ENCODE measurements at regions of chr6 and their contacts with region 1.

Region 1: GRCh38 chr6:149028767-149029405 is 282.1 kb downstream of the UST start:
- DNase-seq: peak; percentile 80
- H3K4me3 ChIP-seq: no peak overlapping the region
- CTCF ChIP-seq: peak; percentile 15

Region 2: GRCh38 chr6:148570451-148570850 is 458.4 kb before region 1 on chr6:
- CTCF ChIA-PET with region 1: interaction called, 105 read pairs
- POLR2A ChIA-PET with region 1: no interaction called
- DNase-seq: no peak
- H3K4me3 ChIP-seq: no peak overlapping the region
- CTCF ChIP-seq: no peak

Region 3: DNA sequence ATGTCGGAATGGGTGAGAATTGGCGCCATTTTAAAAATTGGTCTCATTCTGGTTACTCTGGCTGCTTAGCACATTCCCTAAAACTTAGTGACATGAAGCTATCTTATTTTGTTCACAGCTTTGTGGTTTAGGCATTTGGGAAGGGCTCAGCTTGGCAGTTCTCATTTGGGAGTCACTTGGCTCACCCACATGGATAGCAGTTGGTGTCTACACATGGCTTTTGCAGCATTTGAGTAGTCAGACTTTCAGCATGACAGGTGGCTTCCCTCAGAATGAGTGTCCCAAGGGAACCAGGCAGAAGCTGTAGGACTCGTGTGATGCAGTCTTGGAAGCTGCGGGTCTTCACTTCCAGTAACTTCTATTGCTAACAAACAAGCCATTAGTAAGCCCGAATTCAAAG is 217.4 kb before region 1 on chr6:
- CTCF ChIA-PET with region 1: no interaction called
- POLR2A ChIA-PET with region 1: no interaction called
- DNase-seq: no peak
- H3K4me3 ChIP-seq: no peak overlapping the region
- CTCF ChIP-seq: no peak

Region 4: GRCh38 chr6:148972481-148972880 is 56.4 kb before region 1 on chr6:
- CTCF ChIA-PET with region 1: interaction called, 15 read pairs
- POLR2A ChIA-PET with region 1: no interaction called
- DNase-seq: no peak
- H3K4me3 ChIP-seq: no peak overlapping the region
- CTCF ChIP-seq: no peak

Region 5: DNA sequence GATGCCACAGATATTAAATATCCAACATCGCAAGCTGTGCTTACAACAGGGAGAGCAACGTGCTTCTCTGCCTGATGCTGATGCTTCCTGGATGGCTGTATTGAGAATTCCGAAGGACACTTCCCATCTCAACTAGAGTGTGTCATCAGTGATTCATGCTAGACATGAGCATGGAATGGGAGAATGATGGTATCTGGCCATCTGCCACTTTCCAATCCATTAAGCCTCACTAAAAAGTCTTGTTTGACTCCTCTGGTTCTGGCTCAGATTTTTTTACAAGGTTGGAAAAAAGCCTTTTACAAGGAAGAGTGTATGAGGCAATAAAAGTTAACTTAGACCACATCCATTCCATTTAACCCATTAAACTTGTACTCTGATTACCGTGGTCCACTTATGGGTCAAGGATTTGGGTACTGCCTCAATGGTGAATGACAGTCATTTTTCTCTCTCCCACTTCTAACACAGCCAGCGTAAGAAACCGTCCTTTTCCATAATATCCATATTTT is 16.8 kb before region 1 on chr6:
- CTCF ChIA-PET with region 1: interaction called, 51 read pairs
- POLR2A ChIA-PET with region 1: no interaction called
- DNase-seq: peak; percentile 98
- H3K4me3 ChIP-seq: no peak overlapping the region
- CTCF ChIP-seq: no peak

Region 6: DNA sequence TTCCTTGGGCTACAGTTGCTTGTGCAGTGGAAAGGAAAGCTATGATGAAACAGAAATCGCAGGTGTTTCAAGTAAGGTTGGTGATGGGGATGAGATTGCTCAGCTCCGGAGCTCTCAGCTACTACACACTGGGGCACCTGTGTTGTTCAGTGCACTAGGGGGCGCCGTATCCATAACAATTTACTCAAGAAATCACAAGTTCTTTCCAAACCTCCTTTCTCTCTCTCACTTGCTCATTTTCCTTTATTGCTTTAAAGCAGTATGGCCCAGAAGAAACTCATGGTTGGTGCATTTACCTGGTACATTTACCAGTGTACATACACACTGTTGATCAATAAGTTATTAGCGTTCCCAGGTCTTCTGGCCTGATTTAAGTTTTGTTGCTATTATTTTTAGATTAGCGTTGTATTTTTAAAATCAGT is 53.4 kb after region 1 on chr6:
- CTCF ChIA-PET with region 1: interaction called, 11 read pairs
- POLR2A ChIA-PET with region 1: interaction called, 12 read pairs
- DNase-seq: no peak
- H3K4me3 ChIP-seq: no peak overlapping the region
- CTCF ChIP-seq: peak; percentile 77

Region 7: GRCh38 chr6:149431905-149432775 is 403.3 kb after region 1 on chr6:
- CTCF ChIA-PET with region 1: interaction called, 382 read pairs
- POLR2A ChIA-PET with region 1: interaction called, 3 read pairs
- DNase-seq: no peak
- H3K4me3 ChIP-seq: no peak overlapping the region
- CTCF ChIP-seq: peak; percentile 93

Region 8: GRCh38 chr6:149545754-149546528 is 517.1 kb after region 1 on chr6 and contains the start of gene PPIL4:
- CTCF ChIA-PET with region 1: interaction called, 16 read pairs
- POLR2A ChIA-PET with region 1: no interaction called
- DNase-seq: peak; percentile 56
- H3K4me3 ChIP-seq: peak within 1 kb of the TSS; percentile 94
- CTCF ChIP-seq: peak; percentile 62